AG04450 (cell line): ENCODE measurements at regions of chr5 and their contacts with region 1.

Region 1: GRCh38 chr5:114449860-114450421 is 88.1 kb downstream of the KCNN2 start:
- DNase-seq: peak; percentile 23
- H3K4me3 ChIP-seq: no peak overlapping the region
- H3K27ac ChIP-seq: no peak overlapping the region
- H3K27me3 ChIP-seq: peaks cover 2% of the 10 kb centered on the region
- CTCF ChIP-seq: peak; percentile 88

Region 2: GRCh38 chr5:113606298-113607134 is 843.4 kb before region 1 on chr5:
- CTCF ChIA-PET with region 1: interaction called, 51 read pairs
- POLR2A ChIA-PET with region 1: no interaction called
- DNase-seq: peak; percentile 18
- H3K4me3 ChIP-seq: no peak overlapping the region
- H3K27ac ChIP-seq: no peak overlapping the region
- H3K27me3 ChIP-seq: no peaks in the 10 kb centered on the region
- CTCF ChIP-seq: peak; percentile 82

Region 3: GRCh38 chr5:113678924-113679575 is 770.9 kb before region 1 on chr5:
- CTCF ChIA-PET with region 1: interaction called, 71 read pairs
- POLR2A ChIA-PET with region 1: no interaction called
- DNase-seq: no peak
- H3K4me3 ChIP-seq: no peak overlapping the region
- H3K27ac ChIP-seq: no peak overlapping the region
- H3K27me3 ChIP-seq: no peaks in the 10 kb centered on the region
- CTCF ChIP-seq: peak; percentile 73

Region 4: DNA sequence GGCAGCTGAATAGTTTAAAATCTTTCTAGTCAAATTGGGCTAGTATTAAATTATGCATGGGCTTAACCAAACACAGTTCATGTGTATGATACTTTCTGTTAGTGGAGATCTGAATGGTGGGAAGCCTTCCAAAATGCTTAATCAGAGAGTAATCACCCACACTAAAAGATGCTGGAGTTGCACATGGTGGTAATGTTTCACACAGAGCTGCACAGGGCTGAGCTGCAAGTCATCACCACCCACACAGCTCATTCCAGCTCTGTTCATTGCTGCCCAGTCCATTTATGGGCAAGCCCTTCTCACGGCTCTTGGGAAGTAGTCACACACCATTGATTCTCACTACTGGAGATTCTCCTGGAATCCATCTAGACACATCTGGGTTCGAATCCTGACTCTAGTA is 439.6 kb before region 1 on chr5:
- CTCF ChIA-PET with region 1: no interaction called
- POLR2A ChIA-PET with region 1: no interaction called
- DNase-seq: peak; percentile 29
- H3K4me3 ChIP-seq: no peak overlapping the region
- H3K27ac ChIP-seq: no peak overlapping the region
- H3K27me3 ChIP-seq: no peaks in the 10 kb centered on the region
- CTCF ChIP-seq: no peak

Region 5: DNA sequence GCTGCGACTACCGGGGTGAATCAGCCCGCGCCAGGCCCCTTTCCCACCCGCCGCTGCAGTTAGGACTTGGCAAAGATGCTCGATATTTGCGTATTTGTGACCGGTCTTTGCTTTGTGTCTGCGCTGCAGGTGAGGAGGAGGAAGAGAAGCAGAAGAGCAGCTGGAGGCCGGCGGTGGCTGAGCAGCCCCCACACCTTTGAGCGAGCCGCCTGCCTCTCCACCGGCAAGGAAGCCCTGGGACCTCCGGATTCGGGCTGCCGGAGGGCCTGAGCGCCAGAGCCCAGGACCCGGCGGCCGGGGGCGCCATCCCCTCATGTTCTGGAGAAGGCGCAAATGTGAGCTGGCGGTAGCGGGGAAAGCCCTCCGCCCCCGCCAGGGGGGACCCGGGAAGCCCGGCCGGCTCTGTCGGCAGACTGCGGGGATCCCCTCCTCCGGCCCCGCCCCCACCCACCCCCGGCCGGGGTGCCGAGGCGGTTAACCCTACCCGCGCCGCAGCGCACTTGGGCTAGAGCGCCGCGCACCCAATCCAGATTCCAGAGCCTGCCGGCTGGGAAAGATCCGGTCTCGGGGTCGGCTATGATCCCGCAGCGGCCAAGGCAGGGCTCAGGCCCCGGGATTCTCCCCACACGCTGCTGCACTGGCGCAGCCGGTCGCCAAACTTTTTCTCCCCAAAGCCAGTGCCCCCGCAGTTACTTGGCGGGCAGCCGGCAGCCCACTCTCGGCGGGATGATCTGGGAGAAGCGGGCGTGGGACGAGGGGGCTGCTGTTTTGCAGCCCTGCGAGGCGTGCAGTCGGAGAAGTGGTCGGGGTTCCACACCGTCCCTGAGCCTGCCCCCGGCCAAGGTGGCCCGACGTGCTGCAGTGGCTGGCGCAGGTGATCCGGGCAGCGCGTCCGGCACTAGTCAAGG is 88.9 kb before region 1 on chr5:
- CTCF ChIA-PET with region 1: interaction called, 12 read pairs
- POLR2A ChIA-PET with region 1: no interaction called
- DNase-seq: no peak
- H3K4me3 ChIP-seq: peak overlapping the region; percentile 69
- H3K27ac ChIP-seq: no peak overlapping the region
- H3K27me3 ChIP-seq: peaks cover 35% of the 10 kb centered on the region
- CTCF ChIP-seq: peak; percentile 29; the same call in 1 of the 2 replicates

Region 6: GRCh38 chr5:114467171-114467570 is 17.2 kb after region 1 on chr5:
- CTCF ChIA-PET with region 1: interaction called, 11 read pairs
- POLR2A ChIA-PET with region 1: no interaction called
- DNase-seq: no peak
- H3K4me3 ChIP-seq: no peak overlapping the region
- H3K27ac ChIP-seq: no peak overlapping the region
- H3K27me3 ChIP-seq: peaks cover 2% of the 10 kb centered on the region
- CTCF ChIP-seq: no peak